ENCODE measurements at regions of chr2 and their contacts with region 1.

Region 1: GRCh38 chr2:157596992-157597681 is 31.5 kb downstream of the ACVR1C start:
- DNase-seq: no peak
- ATAC-seq: peak; percentile 78
- H3K4me3 ChIP-seq: no peak overlapping the region
- H3K27ac ChIP-seq: no peak overlapping the region
- H3K4me1 ChIP-seq: no peaks in the 10 kb centered on the region
- H3K27me3 ChIP-seq: no peaks in the 10 kb centered on the region
- CTCF ChIP-seq: peak; percentile 42 to 53 (median 52); a peak in 5 of 6 replicates
- EP300 ChIP-seq: no peak
- POLR2A ChIP-seq: no peak
- RAD21 ChIP-seq: peak; percentile 46

Region 2: GRCh38 chr2:157296490-157297357 is 300.4 kb before region 1 on chr2:
- CTCF ChIA-PET with region 1: interaction called, 90 read pairs
- POLR2A ChIA-PET with region 1: no interaction called
- RAD21 ChIA-PET with region 1: interaction called, 5 read pairs
- SMC1A ChIA-PET with region 1: interaction called, 16 read pairs
- in situ Hi-C with region 1: loop called (anchors 5 kb)
- intact Hi-C with region 1: no loop called
- DNase-seq: no peak
- ATAC-seq: no peak
- H3K4me3 ChIP-seq: no peak overlapping the region
- H3K27ac ChIP-seq: no peak overlapping the region
- H3K4me1 ChIP-seq: no peaks in the 10 kb centered on the region
- H3K27me3 ChIP-seq: peaks cover 0 to 5% of the 10 kb centered on the region in 2 experiments; a peak in 2 of 4 replicates
- CTCF ChIP-seq: no peak
- EP300 ChIP-seq: no peak
- POLR2A ChIP-seq: no peak
- RAD21 ChIP-seq: no peak

Region 3: DNA sequence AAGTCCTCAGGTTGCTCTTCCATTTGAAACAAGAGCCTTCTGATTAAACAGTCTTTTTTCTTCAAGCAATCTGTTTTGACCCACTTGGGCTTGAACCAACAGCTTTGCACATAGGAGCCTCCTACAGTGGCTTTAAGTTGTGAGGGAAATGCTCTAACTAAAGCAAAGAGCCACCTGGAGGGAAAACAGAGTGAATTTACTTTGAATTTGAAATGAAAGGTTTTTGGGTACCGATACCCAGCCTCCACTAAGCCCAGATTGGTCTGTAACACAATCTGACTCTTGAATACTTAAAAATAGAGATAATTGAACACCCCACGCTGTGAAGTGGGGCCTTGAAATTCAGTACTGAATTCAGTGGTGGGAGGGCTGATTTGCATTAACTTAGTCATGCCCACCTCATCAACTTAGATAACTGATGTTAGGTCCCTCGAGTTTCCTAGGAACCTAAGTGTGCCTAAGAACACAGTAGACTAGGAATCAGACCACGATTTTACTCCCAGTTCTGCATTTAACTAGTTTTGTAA is 87.9 kb after region 1 on chr2:
- CTCF ChIA-PET with region 1: no interaction called
- POLR2A ChIA-PET with region 1: no interaction called
- RAD21 ChIA-PET with region 1: no interaction called
- SMC1A ChIA-PET with region 1: no interaction called
- in situ Hi-C with region 1: no loop called
- intact Hi-C with region 1: no loop called
- DNase-seq: no peak
- ATAC-seq: no peak
- H3K4me3 ChIP-seq: no peak overlapping the region
- H3K27ac ChIP-seq: no peak overlapping the region
- H3K4me1 ChIP-seq: no peaks in the 10 kb centered on the region
- H3K27me3 ChIP-seq: no peaks in the 10 kb centered on the region
- CTCF ChIP-seq: no peak
- EP300 ChIP-seq: no peak
- POLR2A ChIP-seq: no peak
- RAD21 ChIP-seq: no peak

Measured in GM12878 (cell line).